ENCODE measurements at regions of chr6 and their contacts with region 1.

Region 1: DNA sequence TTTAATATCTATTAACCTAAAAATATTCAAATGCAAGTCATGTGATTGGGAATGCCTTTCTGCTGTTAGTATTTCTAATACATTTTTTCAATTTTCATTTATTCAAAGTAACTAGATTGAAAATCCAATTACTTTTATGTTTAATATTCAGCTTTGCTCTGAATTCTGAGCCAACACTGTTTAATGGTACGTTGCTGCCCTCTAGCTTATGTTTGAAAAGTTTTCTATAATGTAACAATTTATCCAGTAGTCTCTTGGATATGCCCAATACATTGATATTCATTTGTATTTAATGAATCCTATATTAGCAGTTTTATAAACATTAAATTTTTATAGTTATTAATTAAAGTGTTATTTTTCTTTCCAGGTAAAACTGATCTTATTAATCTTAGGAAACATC is 47.4 kb downstream of the LGSN start:
- DNase-seq: peak; percentile 33
- H3K4me3 ChIP-seq: no peak overlapping the region
- H3K27ac ChIP-seq: no peak overlapping the region
- H3K4me1 ChIP-seq: no peaks in the 10 kb centered on the region
- CTCF ChIP-seq: peak; percentile 75

Region 2: GRCh38 chr6:63066055-63066704 is 206.2 kb before region 1 on chr6:
- CTCF ChIA-PET with region 1: no interaction called
- POLR2A ChIA-PET with region 1: no interaction called
- intact Hi-C with region 1: loop called (anchors 2 kb)
- DNase-seq: peak; percentile 19
- H3K4me3 ChIP-seq: no peak overlapping the region
- H3K27ac ChIP-seq: no peak overlapping the region
- H3K4me1 ChIP-seq: no peaks in the 10 kb centered on the region
- CTCF ChIP-seq: peak; percentile 62